ENCODE measurements at regions of chr14 and their contacts with region 1.

Region 1: GRCh38 chr14:24108336-24108874 is 6.2 kb upstream of the DCAF11 start:
- DNase-seq: no peak
- H3K4me3 ChIP-seq: no peak overlapping the region
- H3K27ac ChIP-seq: peak overlapping the region in 1 of 4 donors; percentile 0
- H3K4me1 ChIP-seq: peaks cover 0 to 12% (median 2%) of the 10 kb centered on the region in 4 donors
- H3K27me3 ChIP-seq: no peaks in the 10 kb centered on the region
- CTCF ChIP-seq: no peak
- EP300 ChIP-seq: no peak
- POLR2A ChIP-seq: no peak

Region 2: DNA sequence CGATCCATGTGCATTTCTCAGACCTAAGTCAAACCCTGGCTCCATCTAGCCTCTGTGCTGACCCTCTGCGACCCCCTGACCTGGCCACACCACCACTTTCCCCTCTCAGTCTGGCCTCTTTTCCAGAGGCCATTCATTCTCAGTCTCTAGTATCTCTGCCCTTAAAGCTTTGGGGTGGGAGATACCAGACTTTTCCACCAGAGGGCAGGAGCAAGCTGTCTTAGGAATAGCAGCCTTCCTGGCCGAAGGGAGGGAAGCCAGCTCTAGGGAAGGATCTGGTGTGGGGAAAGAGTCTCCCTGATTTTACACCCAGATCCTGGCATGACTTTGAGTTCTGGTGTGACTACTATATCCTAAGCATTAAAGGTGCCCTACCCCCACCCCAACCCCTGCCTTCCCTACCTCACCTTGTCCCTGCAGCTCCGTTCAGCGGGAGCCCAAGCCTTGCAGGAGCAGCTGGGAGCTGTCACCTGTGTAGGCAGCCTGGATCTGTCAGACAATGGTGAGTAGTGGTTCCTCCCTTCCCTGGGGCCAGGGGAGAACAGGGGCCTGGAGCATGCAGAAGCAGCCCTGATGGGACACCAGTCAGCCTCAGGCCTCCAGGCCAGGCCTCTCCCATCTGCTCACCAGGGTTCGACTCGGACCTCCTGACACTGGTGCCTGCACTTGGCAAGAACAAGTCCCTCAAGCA is 50.0 kb before region 1 on chr14:
- intact Hi-C with region 1: loop called (anchors 1 kb)
- DNase-seq: peak; percentile 83
- H3K4me3 ChIP-seq: no peak overlapping the region
- H3K27ac ChIP-seq: no peak overlapping the region
- H3K4me1 ChIP-seq: peaks cover 0 to 4% (median 0%) of the 10 kb centered on the region in 4 donors
- H3K27me3 ChIP-seq: no peaks in the 10 kb centered on the region
- CTCF ChIP-seq: peak; percentile 76 to 96 (median 84)
- EP300 ChIP-seq: no peak
- POLR2A ChIP-seq: no peak

Measured in sigmoid colon (tissue), 7 donors.